Gastrocnemius medialis (tissue), 4 donors: ENCODE measurements at regions of chr1 and their contacts with region 1.

Region 1: GRCh38 chr1:25099343-25099951 is 132.9 kb downstream of the SYF2 start:
- DNase-seq: peak in 1 of 2 donors; percentile 20
- ATAC-seq: no peak
- H3K4me3 ChIP-seq: no peak overlapping the region
- H3K27ac ChIP-seq: no peak overlapping the region
- H3K4me1 ChIP-seq: no peaks in the 10 kb centered on the region
- H3K27me3 ChIP-seq: peaks cover 0 to 8% (median 0%) of the 10 kb centered on the region in 3 donors
- CTCF ChIP-seq: no peak
- POLR2A ChIP-seq: no peak

Region 2: GRCh38 chr1:24847995-24848881 is 251.2 kb before region 1 on chr1:
- in situ Hi-C with region 1: loop called in 1 of 4 experiments (anchors 10 kb)
- intact Hi-C with region 1: loop called (anchors 1 kb)
- DNase-seq: peak; percentile 79 to 81
- ATAC-seq: peak; percentile 93 to 94
- H3K4me3 ChIP-seq: peak overlapping the region; percentile 54 to 67 (median 61)
- H3K27ac ChIP-seq: peak overlapping the region in 3 of 4 donors; percentile 15 to 55 (median 36)
- H3K4me1 ChIP-seq: no peaks in the 10 kb centered on the region
- H3K27me3 ChIP-seq: no peaks in the 10 kb centered on the region
- CTCF ChIP-seq: peak; percentile 73 to 95 (median 91)
- POLR2A ChIP-seq: no peak

Region 3: GRCh38 chr1:24930204-24931145 is 169.0 kb before region 1 on chr1 and contains the start of gene RUNX3:
- in situ Hi-C with region 1: loop called in 1 of 4 experiments (anchors 10 kb)
- intact Hi-C with region 1: no loop called
- DNase-seq: peak in 1 of 2 donors; percentile 22
- ATAC-seq: no peak
- H3K4me3 ChIP-seq: peak within 1 kb of the TSS in 3 of 4 donors; percentile 25 to 43 (median 28)
- H3K27ac ChIP-seq: no peak within 1 kb of the TSS
- H3K4me1 ChIP-seq: peaks cover 10 to 17% of the 10 kb centered on the region in 2 donors
- H3K27me3 ChIP-seq: peaks cover 85 to 93% (median 91%) of the 10 kb centered on the region in 3 donors
- CTCF ChIP-seq: no peak
- POLR2A ChIP-seq: no peak
- total RNA-seq, gene RUNX3: 0.13 to 1.9 (median 0.74) TPM

Region 4: DNA sequence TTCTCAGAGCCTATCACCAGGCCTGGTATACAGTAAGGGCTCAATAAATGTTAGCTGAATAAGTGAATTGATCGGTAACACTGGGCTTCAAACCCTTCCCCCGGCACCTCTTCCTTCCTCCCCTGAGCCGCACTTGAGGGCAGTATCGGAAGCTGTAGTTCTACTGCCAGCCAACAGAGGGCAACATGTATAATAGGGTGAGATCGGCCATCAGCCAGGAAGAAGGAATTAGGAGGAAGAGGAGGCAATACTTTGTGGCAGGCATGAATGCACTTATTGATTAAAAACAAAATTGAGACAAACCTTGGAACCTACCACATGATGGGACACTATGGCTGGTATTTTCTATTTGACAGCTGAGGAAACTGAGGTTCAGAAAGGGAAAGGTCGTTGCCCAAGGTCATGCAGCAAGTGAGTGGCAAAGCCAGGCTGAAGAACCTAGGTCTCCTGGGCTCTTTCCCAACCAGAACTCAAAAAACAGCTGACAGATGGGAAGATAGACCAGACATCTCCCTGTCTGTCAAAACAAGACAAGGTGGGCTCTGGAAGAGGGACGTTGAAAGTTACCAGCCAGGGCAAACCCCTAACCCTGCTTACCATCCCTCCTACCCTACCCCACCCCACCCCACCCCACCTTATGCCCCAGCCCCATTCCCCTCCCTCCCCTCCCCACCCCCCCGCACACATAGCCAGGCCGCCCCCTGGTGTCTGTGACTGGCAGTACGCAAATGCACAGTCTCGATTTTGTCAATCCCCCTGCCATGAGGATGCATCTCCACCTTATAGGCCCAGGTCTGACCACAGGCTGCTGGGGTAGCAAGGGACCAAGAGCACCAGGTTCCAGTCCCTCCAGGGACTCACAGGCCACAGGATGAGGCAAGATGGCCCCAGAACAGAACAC is 62.0 kb before region 1 on chr1:
- in situ Hi-C with region 1: no loop called
- intact Hi-C with region 1: loop called (anchors 5 kb)
- DNase-seq: no peak
- ATAC-seq: peak in 1 of 2 donors; percentile 29
- H3K4me3 ChIP-seq: no peak overlapping the region
- H3K27ac ChIP-seq: no peak overlapping the region
- H3K4me1 ChIP-seq: no peaks in the 10 kb centered on the region
- H3K27me3 ChIP-seq: no peaks in the 10 kb centered on the region
- CTCF ChIP-seq: peak; percentile 23 to 53 (median 36)
- POLR2A ChIP-seq: no peak

Region 5: GRCh38 chr1:25082216-25082899 is 17.1 kb before region 1 on chr1:
- in situ Hi-C with region 1: no loop called
- intact Hi-C with region 1: no loop called
- DNase-seq: no peak
- ATAC-seq: no peak
- H3K4me3 ChIP-seq: no peak overlapping the region
- H3K27ac ChIP-seq: no peak overlapping the region
- H3K4me1 ChIP-seq: no peaks in the 10 kb centered on the region
- H3K27me3 ChIP-seq: no peaks in the 10 kb centered on the region
- CTCF ChIP-seq: no peak
- POLR2A ChIP-seq: no peak

Region 6: DNA sequence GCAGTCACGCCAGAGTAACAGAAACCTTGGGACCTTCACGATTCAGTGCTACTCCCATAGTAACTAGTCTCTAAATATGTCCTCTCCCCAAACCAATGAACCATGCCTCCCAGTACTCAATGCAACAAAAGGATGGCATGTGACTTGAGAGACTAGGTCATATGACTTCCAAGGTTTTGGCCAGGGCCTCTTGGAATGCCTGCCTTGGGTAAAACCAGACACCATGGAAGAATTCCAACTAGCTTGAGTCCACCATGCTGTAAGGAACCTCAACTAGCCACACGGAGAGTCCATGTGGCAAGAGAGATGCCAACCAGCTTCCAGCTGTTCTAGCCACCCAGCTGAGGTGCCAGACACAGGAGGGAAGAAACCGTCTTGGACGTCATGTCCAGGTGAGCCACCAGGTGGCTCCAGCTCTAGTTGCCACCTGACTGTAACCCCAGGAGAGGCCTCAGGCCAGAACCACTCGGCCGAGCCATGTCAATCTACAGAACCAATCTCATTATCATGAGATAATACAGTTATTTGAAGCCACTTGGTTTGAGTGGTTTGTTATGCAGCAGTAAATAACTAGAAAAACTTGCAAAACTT is 17.9 kb after region 1 on chr1:
- in situ Hi-C with region 1: no loop called
- intact Hi-C with region 1: no loop called
- DNase-seq: no peak
- ATAC-seq: no peak
- H3K4me3 ChIP-seq: no peak overlapping the region
- H3K27ac ChIP-seq: no peak overlapping the region
- H3K4me1 ChIP-seq: no peaks in the 10 kb centered on the region
- H3K27me3 ChIP-seq: peaks cover 0 to 6% (median 0%) of the 10 kb centered on the region in 3 donors
- CTCF ChIP-seq: no peak
- POLR2A ChIP-seq: no peak